ENCODE measurements at regions of chr6 and their contacts with region 1.

Region 1: DNA sequence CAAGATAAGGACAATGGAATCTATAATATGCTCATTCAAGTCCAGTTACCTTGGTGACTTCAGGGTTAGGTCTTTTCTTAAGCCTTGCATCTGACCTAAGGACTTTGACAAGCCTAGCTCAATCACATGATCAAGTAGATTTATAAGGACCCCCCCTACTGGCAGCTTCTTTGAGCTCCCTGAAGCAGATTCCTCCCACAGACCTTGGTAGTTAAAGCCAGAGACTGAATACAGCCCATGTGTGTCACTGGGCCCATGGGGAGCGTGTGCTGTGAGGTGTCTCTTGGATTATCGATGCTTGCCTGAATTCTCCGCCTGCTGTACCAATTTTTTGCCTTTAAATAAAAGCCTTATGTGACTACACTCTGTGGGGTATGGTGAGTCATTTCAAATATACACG is 372.7 kb upstream of the RGS17 start:
- DNase-seq: no peak
- ATAC-seq: no peak
- H3K4me3 ChIP-seq: no peak overlapping the region
- H3K27ac ChIP-seq: no peak overlapping the region
- H3K4me1 ChIP-seq: no peaks in the 10 kb centered on the region
- H3K27me3 ChIP-seq: no peaks in the 10 kb centered on the region
- CTCF ChIP-seq: no peak
- POLR2A ChIP-seq: no peak

Region 2: GRCh38 chr6:152351110-152351509 is 1152.7 kb before region 1 on chr6:
- intact Hi-C with region 1: no loop called
- DNase-seq: no peak
- ATAC-seq: no peak
- H3K4me3 ChIP-seq: no peak overlapping the region
- H3K27ac ChIP-seq: no peak overlapping the region
- H3K4me1 ChIP-seq: no peaks in the 10 kb centered on the region
- H3K27me3 ChIP-seq: no peaks in the 10 kb centered on the region
- CTCF ChIP-seq: no peak
- POLR2A ChIP-seq: no peak

Region 3: DNA sequence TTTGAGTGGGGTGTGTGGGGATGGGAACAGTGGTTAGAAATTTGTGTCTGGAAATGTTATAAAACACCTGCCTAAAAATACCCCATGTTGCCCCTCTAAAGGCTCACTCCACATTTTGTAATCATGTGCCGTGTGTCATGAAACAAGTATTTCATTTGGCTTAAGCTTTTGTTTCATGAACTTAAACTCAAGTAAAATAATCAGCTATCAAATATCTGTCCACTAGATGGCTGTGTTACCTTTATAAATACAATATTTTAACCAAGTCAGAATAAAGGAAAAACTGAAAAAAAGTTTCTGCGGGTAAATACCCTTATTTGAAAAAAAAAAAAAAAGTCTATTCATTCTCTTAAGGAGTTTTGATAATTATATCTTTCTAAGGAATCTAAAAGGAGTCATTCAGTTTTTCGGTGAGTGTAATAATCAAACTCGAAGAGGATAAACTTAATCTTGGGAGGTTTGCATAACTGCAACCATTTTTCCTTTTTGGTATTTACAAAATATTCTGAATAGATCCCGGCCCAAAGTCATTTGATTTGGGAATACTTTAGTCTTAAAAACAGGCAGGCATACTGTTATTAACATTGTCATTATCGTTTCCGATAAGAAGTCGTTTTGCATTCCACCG is 471.4 kb before region 1 on chr6:
- intact Hi-C with region 1: loop called (anchors 10 kb)
- DNase-seq: no peak
- ATAC-seq: peak; percentile 56
- H3K4me3 ChIP-seq: no peak overlapping the region
- H3K27ac ChIP-seq: peak overlapping the region in 1 of 4 donors; percentile 38
- H3K4me1 ChIP-seq: peaks cover 13% of the 10 kb centered on the region
- H3K27me3 ChIP-seq: no peaks in the 10 kb centered on the region
- CTCF ChIP-seq: peak in 6 of 7 experiments; percentile 37 to 62 (median 56)
- POLR2A ChIP-seq: no peak

Region 4: GRCh38 chr6:153150752-153151440 is 352.9 kb before region 1 on chr6:
- intact Hi-C with region 1: no loop called
- DNase-seq: no peak
- ATAC-seq: no peak
- H3K4me3 ChIP-seq: no peak overlapping the region
- H3K27ac ChIP-seq: no peak overlapping the region
- H3K4me1 ChIP-seq: no peaks in the 10 kb centered on the region
- H3K27me3 ChIP-seq: no peaks in the 10 kb centered on the region
- CTCF ChIP-seq: no peak
- POLR2A ChIP-seq: no peak

Measured in body of pancreas (tissue), 4 donors.